Activated CD4-positive, alpha-beta memory T cell treated with anti-CD3 and anti-CD28 coated beads for 36 hours (primary cell): ENCODE measurements at regions of chr5 and their contacts with region 1.

Region 1: GRCh38 chr5:6820851-6821479 is 107.7 kb downstream of the TENT4A start:
- DNase-seq: peak; percentile 75
- H3K4me3 Mint-ChIP-seq: no peak overlapping the region
- H3K27ac Mint-ChIP-seq: no peak overlapping the region
- H3K4me1 Mint-ChIP-seq: no peaks in the 10 kb centered on the region
- H3K27me3 Mint-ChIP-seq: peaks cover 36% of the 10 kb centered on the region

Region 2: GRCh38 chr5:6837519-6838110 is 16.6 kb after region 1 on chr5:
- CTCF ChIA-PET with region 1: interaction called, 19 read pairs
- POLR2A ChIA-PET with region 1: no interaction called
- intact Hi-C with region 1: no loop called
- DNase-seq: peak; percentile 60
- H3K4me3 Mint-ChIP-seq: no peak overlapping the region
- H3K27ac Mint-ChIP-seq: no peak overlapping the region
- H3K4me1 Mint-ChIP-seq: peaks cover 3% of the 10 kb centered on the region
- H3K27me3 Mint-ChIP-seq: peaks cover 10% of the 10 kb centered on the region

Region 3: DNA sequence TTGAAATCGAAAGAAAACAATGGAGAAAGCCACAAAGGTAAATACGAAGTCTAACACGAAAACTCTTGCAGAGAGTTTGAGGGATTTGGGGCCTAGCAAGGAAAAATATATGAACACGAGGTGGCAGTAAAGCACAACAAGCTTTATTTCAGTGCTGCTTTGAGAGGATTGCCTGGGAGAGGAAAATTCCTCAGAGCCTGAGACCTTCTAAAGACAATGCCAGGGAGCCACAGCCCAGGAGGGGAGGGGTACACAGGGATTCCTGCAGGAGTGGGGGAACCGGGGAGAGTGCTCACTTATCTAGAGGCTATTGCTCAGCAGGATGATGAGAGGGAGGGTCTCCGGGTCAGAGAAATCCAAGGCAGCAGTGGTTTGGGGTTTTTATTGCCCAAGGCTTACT is 440.1 kb after region 1 on chr5:
- CTCF ChIA-PET with region 1: no interaction called
- POLR2A ChIA-PET with region 1: no interaction called
- intact Hi-C with region 1: loop called (anchors 5 kb)
- DNase-seq: no peak
- H3K4me3 Mint-ChIP-seq: no peak overlapping the region
- H3K27ac Mint-ChIP-seq: no peak overlapping the region
- H3K4me1 Mint-ChIP-seq: no peaks in the 10 kb centered on the region
- H3K27me3 Mint-ChIP-seq: peaks cover 1% of the 10 kb centered on the region

Region 4: DNA sequence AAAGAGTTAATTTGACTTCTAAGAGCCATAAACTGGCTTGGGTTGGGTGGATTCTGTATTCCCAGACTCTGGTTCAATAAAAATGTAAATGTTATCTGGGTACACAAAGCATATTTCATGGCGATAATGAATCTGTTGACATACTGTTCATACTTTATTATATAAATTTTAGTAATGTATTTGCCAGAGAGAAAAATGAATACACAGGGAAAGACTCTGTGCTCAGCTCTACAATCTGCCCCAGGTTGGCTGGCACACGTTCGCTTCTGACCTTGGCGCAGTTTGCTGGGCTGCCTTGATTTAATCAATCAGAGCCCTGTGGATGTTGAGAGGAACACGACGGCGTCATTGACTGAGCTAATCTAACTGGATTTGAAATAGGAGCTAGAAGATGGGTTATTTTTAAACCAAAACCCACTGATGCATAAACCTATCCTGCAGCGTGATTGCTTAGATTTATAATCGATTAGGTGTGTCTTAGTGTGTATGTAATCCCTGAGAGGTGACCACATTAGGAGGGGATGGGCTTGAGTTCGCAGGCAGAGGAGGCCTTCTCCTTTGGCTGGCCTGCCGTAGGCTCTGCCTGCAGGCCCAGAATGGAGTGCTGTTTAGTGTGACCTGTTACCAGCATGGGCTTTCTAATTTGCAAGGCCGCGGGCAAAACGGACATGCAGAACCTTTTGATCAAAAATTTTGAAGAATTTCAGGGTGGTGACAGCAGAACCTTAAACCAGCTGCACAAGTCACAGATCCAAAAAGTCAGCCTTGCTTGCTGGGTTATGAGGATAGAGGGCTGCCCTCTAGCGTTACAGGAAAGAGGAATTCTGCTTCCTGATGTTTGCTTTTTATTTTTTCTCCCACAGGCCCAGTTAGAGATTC is 571.1 kb after region 1 on chr5:
- CTCF ChIA-PET with region 1: no interaction called
- POLR2A ChIA-PET with region 1: no interaction called
- intact Hi-C with region 1: loop called (anchors 5 kb)
- DNase-seq: no peak
- H3K4me3 Mint-ChIP-seq: no peak overlapping the region
- H3K27ac Mint-ChIP-seq: no peak overlapping the region
- H3K4me1 Mint-ChIP-seq: peaks cover 4% of the 10 kb centered on the region
- H3K27me3 Mint-ChIP-seq: peaks cover 18% of the 10 kb centered on the region

Region 5: GRCh38 chr5:7745882-7746610 is 925.1 kb after region 1 on chr5:
- CTCF ChIA-PET with region 1: interaction called, 18 read pairs
- POLR2A ChIA-PET with region 1: no interaction called
- intact Hi-C with region 1: loop called (anchors 1 kb)
- DNase-seq: peak; percentile 53
- H3K4me3 Mint-ChIP-seq: no peak overlapping the region
- H3K27ac Mint-ChIP-seq: no peak overlapping the region
- H3K4me1 Mint-ChIP-seq: no peaks in the 10 kb centered on the region
- H3K27me3 Mint-ChIP-seq: peaks cover 8% of the 10 kb centered on the region